ENCODE measurements at regions of chr1 and their contacts with region 1.

Region 1: GRCh38 chr1:9004700-9005394 is 21.4 kb downstream of the SLC2A7 start:
- DNase-seq: peak; percentile 91
- ATAC-seq: peak; percentile 95
- H3K4me3 Mint-ChIP-seq: no peak overlapping the region
- H3K27ac Mint-ChIP-seq: no peak overlapping the region
- H3K4me1 Mint-ChIP-seq: no peaks in the 10 kb centered on the region
- H3K27me3 Mint-ChIP-seq: no peaks in the 10 kb centered on the region

Region 2: DNA sequence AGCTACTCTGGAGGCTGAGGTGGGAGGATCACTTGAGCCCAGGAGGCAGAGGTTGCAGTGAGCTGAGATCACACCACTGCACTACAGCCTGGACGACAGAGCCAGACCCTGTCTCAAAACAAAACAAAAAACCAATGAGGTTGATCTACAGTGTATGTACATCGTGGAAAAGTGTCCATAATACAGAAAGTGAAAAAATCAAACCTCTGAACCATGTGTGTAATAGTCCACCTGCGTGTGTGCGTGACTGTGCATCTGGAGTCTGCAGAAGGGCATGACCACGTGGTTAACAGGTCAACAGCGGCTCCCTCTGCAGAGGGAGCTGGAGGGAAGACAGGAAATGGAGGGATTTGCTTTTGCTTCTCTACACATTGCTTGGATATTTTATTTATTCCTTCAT is 93.9 kb before region 1 on chr1:
- CTCF ChIA-PET with region 1: interaction called, 84 read pairs
- POLR2A ChIA-PET with region 1: no interaction called
- intact Hi-C with region 1: no loop called
- DNase-seq: no peak
- ATAC-seq: peak; percentile 36
- H3K4me3 Mint-ChIP-seq: no peak overlapping the region
- H3K27ac Mint-ChIP-seq: no peak overlapping the region
- H3K4me1 Mint-ChIP-seq: peaks cover 2% of the 10 kb centered on the region
- H3K27me3 Mint-ChIP-seq: no peaks in the 10 kb centered on the region

Region 3: DNA sequence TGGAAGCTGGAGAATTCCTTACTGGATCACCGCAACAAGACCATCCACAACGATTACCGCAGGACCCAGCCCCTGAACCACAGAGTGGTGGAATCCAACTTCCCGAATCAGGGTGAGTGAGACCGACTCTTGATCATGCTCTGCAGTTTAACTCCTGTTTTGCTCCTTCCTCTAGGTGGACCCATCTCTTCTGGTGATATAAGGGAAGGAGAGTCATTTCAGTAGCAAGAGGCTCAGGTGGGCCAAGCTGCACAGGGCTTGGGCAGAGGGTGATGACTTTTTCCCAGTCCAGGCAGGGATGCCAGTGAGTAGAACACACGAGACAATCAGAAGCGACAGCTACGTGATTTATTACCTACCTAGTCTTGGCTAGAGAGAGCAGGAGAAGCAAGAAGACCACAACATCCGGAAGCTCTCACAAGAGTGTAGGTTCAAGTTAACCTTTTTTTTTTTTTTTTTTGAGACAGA is 33.9 kb before region 1 on chr1:
- CTCF ChIA-PET with region 1: interaction called, 10 read pairs
- POLR2A ChIA-PET with region 1: no interaction called
- intact Hi-C with region 1: no loop called
- DNase-seq: peak; percentile 74
- ATAC-seq: peak; percentile 94
- H3K4me3 Mint-ChIP-seq: peak overlapping the region; percentile 72
- H3K27ac Mint-ChIP-seq: peak overlapping the region; percentile 84
- H3K4me1 Mint-ChIP-seq: peaks cover 39% of the 10 kb centered on the region
- H3K27me3 Mint-ChIP-seq: no peaks in the 10 kb centered on the region

Region 4: GRCh38 chr1:9048551-9048950 is 43.7 kb after region 1 on chr1:
- CTCF ChIA-PET with region 1: interaction called, 10 read pairs
- POLR2A ChIA-PET with region 1: no interaction called
- intact Hi-C with region 1: no loop called
- DNase-seq: no peak
- ATAC-seq: no peak
- H3K4me3 Mint-ChIP-seq: no peak overlapping the region
- H3K27ac Mint-ChIP-seq: no peak overlapping the region
- H3K4me1 Mint-ChIP-seq: no peaks in the 10 kb centered on the region
- H3K27me3 Mint-ChIP-seq: no peaks in the 10 kb centered on the region

Region 5: DNA sequence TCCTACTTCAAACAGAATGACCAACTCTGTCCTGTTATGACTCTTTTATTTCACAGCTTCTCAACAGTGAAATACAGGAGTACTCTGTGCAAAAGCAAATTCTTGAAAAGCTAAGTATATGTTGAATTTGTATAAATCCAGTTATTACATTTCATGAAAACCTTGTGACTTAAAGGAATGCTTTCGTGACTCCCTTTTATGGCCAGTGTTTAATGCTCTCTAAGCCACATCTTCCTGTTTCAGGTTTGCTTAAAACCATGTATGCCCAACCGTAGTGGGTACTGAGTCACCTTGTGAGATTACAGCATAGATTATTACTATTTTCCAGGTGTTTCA is 1165.4 kb after region 1 on chr1:
- CTCF ChIA-PET with region 1: no interaction called
- POLR2A ChIA-PET with region 1: no interaction called
- intact Hi-C with region 1: no loop called
- DNase-seq: peak; percentile 48
- ATAC-seq: peak; percentile 89
- H3K4me3 Mint-ChIP-seq: peak overlapping the region; percentile 31
- H3K27ac Mint-ChIP-seq: peak overlapping the region; percentile 93
- H3K4me1 Mint-ChIP-seq: peaks cover 46% of the 10 kb centered on the region
- H3K27me3 Mint-ChIP-seq: no peaks in the 10 kb centered on the region

Measured in activated CD4-positive, alpha-beta T cell treated with anti-CD3 and anti-CD28 coated beads for 36 hours (primary cell).